IMR-90 (cell line): ENCODE measurements at regions of chr4 and their contacts with region 1.

Region 1: DNA sequence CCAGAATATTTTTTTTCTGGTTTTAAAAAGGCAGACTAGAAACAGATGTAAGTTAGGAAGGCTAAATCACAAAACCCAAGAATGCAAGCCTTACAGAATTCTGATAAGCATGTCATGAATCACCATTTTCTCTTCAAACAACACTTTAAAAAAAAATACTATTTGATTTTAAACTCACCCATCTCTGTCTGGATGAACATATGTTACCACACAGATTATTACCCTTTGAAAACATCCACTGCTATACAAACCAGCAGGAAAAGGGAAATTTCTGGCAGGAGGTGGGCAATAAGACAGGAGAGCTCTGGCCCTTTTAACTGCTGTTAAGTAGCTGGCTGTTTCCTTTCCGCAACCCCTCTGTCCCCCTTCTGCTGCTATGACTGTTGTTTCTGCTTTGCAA is 317.7 kb upstream of the NOCT start:
- DNase-seq: peak; percentile 84
- ATAC-seq: peak; percentile 62
- H3K4me3 ChIP-seq: no peak overlapping the region
- H3K27ac ChIP-seq: peak overlapping the region; percentile 100
- H3K4me1 ChIP-seq: peaks cover 24% of the 10 kb centered on the region
- H3K27me3 ChIP-seq: no peaks in the 10 kb centered on the region
- CTCF ChIP-seq: no peak
- POLR2A ChIP-seq: no peak
- RAD21 ChIP-seq: no peak

Region 2: DNA sequence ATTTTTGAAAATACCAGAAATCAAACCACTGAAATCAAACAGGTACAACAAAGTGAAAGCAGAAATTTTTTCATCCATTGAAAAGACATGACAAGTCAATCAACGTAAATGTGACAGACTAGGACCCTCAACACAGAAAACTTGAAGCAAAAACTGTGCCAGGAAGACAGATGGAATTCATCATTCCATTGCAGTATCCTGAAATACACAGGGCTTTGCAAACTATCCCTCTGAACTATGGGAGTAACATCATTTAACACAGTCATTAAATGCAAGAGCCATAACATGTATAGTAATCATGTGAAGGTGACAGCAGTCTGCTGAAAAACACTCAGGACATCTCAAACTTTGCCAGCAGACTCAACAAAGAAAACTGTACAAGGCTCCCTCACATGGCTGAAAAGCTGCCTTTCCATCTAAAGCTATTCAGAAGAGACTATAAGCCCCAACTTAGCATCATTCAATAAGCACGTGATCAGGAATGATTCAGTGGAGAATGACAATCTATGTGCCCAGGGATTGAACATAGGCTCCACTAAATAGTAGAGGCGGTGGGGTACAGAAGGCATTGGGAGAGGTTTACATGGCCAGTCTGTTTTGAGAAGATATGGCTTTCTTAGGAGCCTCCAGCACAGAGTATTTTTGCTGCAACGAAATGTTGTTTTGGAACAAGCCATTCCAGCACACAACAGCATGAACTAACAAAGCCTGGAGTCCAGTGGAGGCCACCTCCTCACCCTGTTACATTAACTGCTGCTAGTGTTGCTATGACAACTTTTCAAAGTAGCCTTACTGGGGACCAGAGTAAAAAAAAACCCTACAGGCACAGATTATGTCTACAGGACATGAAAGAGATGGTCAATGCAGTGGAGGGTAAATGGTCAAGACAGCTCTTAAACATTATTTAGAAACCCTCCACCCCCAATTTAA is 43.2 kb after region 1 on chr4:
- CTCF ChIA-PET with region 1: no interaction called
- POLR2A ChIA-PET with region 1: no interaction called
- dilution Hi-C with region 1: no loop called
- in situ Hi-C with region 1: no loop called
- intact Hi-C with region 1: loop called (anchors 5 kb)
- DNase-seq: no peak
- ATAC-seq: no peak; the same call in 1 of the 2 replicates
- H3K4me3 ChIP-seq: no peak overlapping the region
- H3K27ac ChIP-seq: no peak overlapping the region
- H3K4me1 ChIP-seq: peaks cover under 1% of the 10 kb centered on the region; the same call in 1 of the 2 replicates
- H3K27me3 ChIP-seq: no peaks in the 10 kb centered on the region
- CTCF ChIP-seq: no peak
- POLR2A ChIP-seq: no peak
- RAD21 ChIP-seq: no peak

Region 3: DNA sequence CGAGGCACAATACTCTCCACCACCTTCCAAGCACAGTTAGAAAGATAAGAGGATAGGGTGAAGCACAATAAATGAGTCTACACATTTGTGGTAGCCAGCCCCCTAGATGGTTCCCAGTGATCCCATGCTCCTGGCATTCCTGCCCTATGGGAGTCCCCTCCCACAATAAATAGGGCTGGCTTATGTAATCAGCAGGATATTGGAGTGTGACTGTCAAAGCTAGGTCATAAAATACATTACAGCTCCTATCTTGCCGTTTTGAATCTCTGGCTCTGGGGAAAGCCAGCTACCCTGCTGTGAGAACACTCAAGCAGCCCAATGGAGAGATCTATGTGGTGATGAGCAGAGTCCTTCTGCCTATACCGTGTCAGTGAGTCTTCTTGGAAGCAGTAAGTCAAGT is 119.0 kb after region 1 on chr4:
- CTCF ChIA-PET with region 1: no interaction called
- POLR2A ChIA-PET with region 1: no interaction called
- dilution Hi-C with region 1: no loop called
- in situ Hi-C with region 1: no loop called
- intact Hi-C with region 1: no loop called
- DNase-seq: no peak
- ATAC-seq: no peak
- H3K4me3 ChIP-seq: no peak overlapping the region
- H3K27ac ChIP-seq: no peak overlapping the region
- H3K4me1 ChIP-seq: no peaks in the 10 kb centered on the region
- H3K27me3 ChIP-seq: no peaks in the 10 kb centered on the region; the same call in 1 of the 2 replicates
- CTCF ChIP-seq: no peak
- POLR2A ChIP-seq: no peak
- RAD21 ChIP-seq: no peak